Mammary epithelial cell (primary cell): ENCODE measurements at regions of chr10 and their contacts with region 1.

Region 1: DNA sequence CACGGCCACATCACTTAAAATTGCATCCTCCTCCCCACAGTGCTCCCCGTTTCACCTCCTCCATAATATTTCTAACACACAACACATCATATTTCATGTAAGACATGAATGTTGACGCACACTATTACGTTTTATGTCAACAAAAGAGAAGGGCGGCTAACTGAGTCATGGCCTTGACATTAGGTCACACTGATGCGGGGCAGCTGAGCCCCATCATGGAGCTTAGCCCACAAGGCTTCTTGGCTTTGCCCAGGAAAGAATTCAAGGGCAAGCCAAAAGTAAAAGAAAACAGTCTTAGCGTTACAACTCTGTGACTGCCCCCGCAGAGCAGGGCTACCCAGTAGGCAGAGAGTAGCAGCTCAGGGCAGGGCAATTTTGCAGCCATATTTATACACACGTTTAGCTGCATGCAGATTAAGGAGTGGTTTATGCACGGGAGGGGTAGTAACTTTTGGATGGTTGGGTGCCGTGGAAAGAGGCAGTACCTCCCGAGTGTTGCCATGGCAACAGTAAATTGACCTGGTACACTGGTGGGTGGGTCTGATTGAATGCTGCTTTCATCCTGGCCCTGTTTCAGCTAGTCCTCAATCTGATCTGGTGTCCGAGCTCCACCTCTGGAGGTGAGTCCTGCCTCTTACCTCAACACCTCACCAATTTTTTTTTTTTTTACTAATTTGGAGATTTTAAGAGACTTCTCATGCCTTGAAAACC is 156.2 kb upstream of the FRMD4A start:
- DNase-seq: no peak
- H3K4me3 ChIP-seq: no peak overlapping the region
- H3K27ac ChIP-seq: no peak overlapping the region
- H3K4me1 ChIP-seq: peaks cover 10% of the 10 kb centered on the region
- H3K27me3 ChIP-seq: no peaks in the 10 kb centered on the region
- CTCF ChIP-seq: no peak

Region 2: GRCh38 chr10:12844811-12845533 is 1642.0 kb before region 1 on chr10:
- CTCF ChIA-PET with region 1: no interaction called
- dilution Hi-C with region 1: no loop called
- in situ Hi-C with region 1: no loop called
- intact Hi-C with region 1: loop called (anchors 10 kb)
- DNase-seq: peak; percentile 51
- H3K4me3 ChIP-seq: peak overlapping the region in 2 of 3 experiments; percentile 30 to 35
- H3K27ac ChIP-seq: peak overlapping the region; percentile 7
- H3K4me1 ChIP-seq: peaks cover 18% of the 10 kb centered on the region
- H3K27me3 ChIP-seq: no peaks in the 10 kb centered on the region
- CTCF ChIP-seq: no peak

Region 3: GRCh38 chr10:14225379-14226150 is 261.4 kb before region 1 on chr10:
- CTCF ChIA-PET with region 1: no interaction called
- dilution Hi-C with region 1: loop called (anchors 10 kb)
- in situ Hi-C with region 1: no loop called
- intact Hi-C with region 1: no loop called
- DNase-seq: no peak
- H3K4me3 ChIP-seq: no peak overlapping the region
- H3K27ac ChIP-seq: no peak overlapping the region
- H3K4me1 ChIP-seq: no peaks in the 10 kb centered on the region
- H3K27me3 ChIP-seq: no peaks in the 10 kb centered on the region
- CTCF ChIP-seq: no peak

Region 4: DNA sequence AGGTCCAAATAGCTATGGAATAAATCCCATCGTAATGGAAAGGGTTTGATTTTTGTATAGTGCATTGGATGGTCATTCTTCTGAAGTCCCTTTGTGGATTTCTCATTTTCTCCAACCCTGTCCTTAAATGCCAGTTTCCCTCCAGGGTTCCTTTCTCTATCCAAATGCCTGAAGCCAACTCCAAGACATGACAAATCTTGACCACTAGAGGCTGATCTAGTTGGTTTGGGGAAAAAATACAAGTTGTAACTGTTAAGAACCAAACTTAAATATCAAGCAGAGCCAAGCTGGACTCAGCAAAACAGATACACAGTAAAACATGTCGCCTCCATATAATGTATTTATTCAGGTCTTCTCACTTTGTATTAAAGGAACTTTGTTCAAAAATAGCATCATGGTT is 184.9 kb before region 1 on chr10:
- CTCF ChIA-PET with region 1: no interaction called
- dilution Hi-C with region 1: no loop called
- in situ Hi-C with region 1: no loop called
- intact Hi-C with region 1: no loop called
- DNase-seq: peak; percentile 7
- H3K4me3 ChIP-seq: no peak overlapping the region
- H3K27ac ChIP-seq: no peak overlapping the region
- H3K4me1 ChIP-seq: no peaks in the 10 kb centered on the region
- H3K27me3 ChIP-seq: peaks cover 1% of the 10 kb centered on the region
- CTCF ChIP-seq: peak; percentile 48 to 66